Activated naive CD4-positive, alpha-beta T cell treated with anti-CD3 and anti-CD28 coated beads for 36 hours (primary cell): ENCODE measurements at regions of chr6 and their contacts with region 1.

Region 1: DNA sequence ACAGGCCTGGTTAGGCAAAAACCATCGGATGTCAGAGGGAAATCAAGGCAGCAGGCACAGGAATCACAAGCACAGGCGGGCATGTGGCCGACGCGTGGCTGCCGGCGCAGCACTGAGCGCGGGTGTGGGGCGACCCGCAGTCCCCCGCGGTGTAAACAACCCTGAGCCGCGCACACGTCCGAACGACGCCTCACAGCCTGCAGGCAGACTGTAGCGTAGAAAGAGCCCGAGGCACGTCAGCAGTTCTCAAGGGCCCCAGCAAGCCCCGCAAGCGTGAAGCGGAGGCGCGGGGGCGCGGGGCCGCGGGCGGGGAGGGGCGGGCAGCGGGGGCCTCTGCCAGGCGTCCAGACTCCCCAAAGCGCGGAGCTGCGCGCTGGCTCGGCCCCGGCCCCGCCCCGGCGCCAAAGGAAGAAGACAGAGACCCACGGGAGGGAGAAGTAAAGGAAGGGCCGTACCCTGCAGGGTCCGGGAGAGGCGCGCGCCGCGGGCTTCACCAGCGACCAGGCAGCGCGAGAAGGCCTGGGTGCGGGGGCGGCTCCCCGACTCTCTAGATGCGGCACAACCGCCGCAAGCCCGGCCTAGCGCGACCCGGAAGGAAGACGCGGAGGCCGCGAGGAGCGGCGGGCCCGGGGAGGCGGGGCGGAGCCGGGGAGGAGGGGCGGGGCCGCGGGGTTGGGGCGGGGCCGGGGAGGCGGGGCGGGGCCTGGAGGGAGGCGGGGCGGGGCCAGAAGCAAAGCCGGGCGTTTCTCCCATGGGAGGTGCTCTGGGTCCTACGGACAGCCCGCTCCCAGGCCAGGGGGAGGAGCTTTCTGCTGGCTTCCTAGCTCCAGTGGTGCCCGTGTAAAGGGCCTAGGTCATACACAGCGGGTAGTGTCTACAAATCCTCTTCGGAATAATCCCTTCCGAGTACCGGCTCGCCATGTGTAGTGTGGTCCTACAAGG is at the start of gene FBXL4:
- DNase-seq: peak; percentile 84
- H3K4me3 Mint-ChIP-seq: peak within 1 kb of the TSS; percentile 93
- H3K27ac Mint-ChIP-seq: peak within 1 kb of the TSS; percentile 93
- H3K4me1 Mint-ChIP-seq: peaks cover 34% of the 10 kb centered on the region
- H3K27me3 Mint-ChIP-seq: peaks cover 2% of the 10 kb centered on the region
- total RNA-seq, gene FBXL4: 16.3 to 16.7 TPM

Region 2: DNA sequence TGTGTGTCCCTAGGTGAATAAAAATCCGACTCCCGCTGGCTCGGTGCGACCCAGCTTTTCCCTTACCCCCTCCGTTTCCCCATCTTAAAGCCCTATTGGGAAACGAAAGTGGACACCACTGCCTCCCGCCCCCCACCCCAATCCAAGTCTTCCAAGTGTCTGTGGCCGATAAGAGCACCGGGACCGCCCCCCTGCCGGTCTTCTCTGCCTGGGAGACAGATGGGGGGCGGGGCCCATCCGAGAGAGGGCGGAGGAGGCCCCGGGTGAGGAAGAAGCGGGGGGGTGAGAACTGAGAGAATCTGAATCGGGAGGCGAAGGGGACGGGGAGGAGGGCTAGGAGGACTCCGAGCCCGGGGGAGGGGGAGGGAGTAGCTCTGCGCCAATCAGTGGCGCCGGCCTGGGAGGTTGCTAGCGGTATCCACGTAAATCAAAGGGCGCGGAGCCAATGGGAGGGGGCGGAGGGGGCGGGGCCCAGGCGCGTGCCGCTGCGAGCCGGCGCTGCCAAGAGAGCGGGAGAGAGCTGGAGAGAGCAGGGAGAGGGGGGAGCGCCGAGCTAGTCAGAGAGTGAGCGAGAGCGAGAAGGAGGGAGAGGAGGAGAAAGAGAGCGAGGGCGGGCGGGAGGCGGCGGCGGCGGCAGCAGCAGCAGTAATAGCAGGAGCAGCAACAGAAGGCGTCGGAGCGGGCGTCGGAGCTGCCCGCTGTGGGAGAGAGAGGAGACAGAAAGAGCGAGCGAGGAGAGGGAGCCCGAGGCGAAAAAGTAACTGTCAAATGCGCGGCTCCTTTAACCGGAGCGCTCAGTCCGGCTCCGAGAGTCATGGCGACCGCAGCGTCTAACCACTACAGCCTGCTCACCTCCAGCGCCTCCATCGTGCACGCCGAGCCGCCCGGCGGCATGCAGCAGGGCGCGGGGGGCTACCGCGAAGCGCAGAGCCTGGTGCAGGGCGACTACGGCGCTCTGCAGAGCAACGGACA is 113.3 kb before region 1 on chr6 and contains the start of gene POU3F2:
- CTCF ChIA-PET with region 1: no interaction called
- intact Hi-C with region 1: loop called (anchors 2 kb)
- DNase-seq: peak; percentile 78
- H3K4me3 Mint-ChIP-seq: peak within 1 kb of the TSS; percentile 73
- H3K27ac Mint-ChIP-seq: no peak within 1 kb of the TSS
- H3K4me1 Mint-ChIP-seq: peaks cover 34% of the 10 kb centered on the region
- H3K27me3 Mint-ChIP-seq: peaks cover 72% of the 10 kb centered on the region
- total RNA-seq, gene POU3F2: not detected

Region 3: DNA sequence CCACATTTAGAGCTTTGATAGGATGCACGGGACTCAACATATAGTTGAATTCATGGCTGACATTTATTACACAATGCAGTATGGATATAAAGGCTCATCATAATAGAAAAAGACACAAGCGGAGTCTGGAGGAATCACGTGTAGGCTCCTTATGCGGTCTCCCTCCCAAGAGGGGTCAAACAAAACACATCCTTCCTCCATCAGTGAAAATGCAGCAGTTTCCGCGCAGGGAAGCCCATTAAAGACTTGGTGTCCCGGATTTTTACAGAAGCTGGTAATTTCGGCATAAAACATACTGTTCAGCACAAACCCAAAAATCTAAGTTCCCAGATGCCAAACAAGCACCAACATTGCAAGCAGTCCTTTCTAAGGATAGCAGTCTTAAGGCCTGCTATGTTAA is 566.5 kb after region 1 on chr6:
- CTCF ChIA-PET with region 1: no interaction called
- intact Hi-C with region 1: loop called (anchors 1 kb)
- DNase-seq: no peak
- H3K4me3 Mint-ChIP-seq: peak overlapping the region; percentile 93
- H3K27ac Mint-ChIP-seq: no peak overlapping the region
- H3K4me1 Mint-ChIP-seq: peaks cover 27% of the 10 kb centered on the region
- H3K27me3 Mint-ChIP-seq: no peaks in the 10 kb centered on the region